ENCODE measurements at regions of chr10 and their contacts with region 1.

Region 1: GRCh38 chr10:96719850-96720421 is 378 bp downstream of the PIK3AP1 start:
- DNase-seq: peak; percentile 88
- ATAC-seq: peak; percentile 63
- H3K4me3 ChIP-seq: peak overlapping the region; percentile 86 to 98 (median 91)
- H3K4me3 Mint-ChIP-seq: peak overlapping the region; percentile 100
- H3K27ac ChIP-seq: peak overlapping the region; percentile 86 to 93
- H3K27ac Mint-ChIP-seq: peak overlapping the region; percentile 99
- H3K4me1 ChIP-seq: peaks cover 49 to 70% of the 10 kb centered on the region in 2 donors
- H3K4me1 Mint-ChIP-seq: peaks cover 70% of the 10 kb centered on the region
- H3K27me3 ChIP-seq: no peaks in the 10 kb centered on the region
- H3K27me3 Mint-ChIP-seq: no peaks in the 10 kb centered on the region
- CTCF ChIP-seq: peak; percentile 77

Region 2: DNA sequence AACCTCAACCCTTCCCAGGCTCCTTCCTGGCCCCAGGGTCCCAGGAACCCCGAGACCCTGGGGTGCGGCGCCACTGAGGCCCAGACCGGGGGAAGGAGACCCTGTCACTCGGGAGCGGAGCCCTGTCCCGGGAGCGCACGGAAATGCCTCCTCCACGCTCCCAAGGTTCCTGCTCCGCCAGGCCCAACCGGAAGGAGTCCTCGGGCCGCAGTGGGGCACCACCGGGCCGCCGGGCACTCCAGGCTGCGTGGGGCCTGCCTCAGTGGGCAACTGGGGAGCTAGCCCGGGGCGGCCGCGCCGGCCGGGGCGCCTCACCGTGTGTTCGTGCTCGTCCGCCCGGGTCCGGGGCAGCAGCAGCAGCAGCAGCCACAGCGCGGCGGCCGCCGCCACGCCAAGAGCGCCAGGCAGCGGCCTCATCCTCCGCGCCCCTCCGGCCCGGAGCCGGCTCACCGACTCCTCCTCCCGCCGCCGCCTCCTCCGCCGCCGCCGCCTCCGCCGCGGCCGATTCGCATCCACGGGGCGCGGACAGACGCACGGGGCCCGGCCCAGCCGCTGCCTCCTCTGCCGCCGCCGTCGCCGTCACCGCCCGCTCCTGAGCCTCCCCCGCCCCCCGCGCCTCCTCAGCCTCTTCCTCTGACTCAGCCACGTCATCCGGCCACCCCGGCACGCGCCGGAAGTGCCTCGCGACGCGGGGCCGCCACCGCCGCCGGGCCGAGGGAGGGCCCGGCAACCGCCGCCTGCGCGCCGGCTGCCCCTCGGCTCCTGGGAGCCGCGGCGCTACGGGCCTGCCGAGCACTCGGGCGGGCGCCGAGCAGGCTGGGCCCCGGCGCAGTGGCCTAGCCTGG is 133.3 kb before region 1 on chr10 and contains the start of gene TM9SF3:
- CTCF ChIA-PET with region 1: no interaction called
- POLR2A ChIA-PET with region 1: no interaction called
- intact Hi-C with region 1: loop called (anchors 5 kb)
- DNase-seq: peak; percentile 96
- ATAC-seq: peak; percentile 87
- H3K4me3 ChIP-seq: peak within 1 kb of the TSS; percentile 69 to 97 (median 84)
- H3K4me3 Mint-ChIP-seq: peak within 1 kb of the TSS; percentile 91
- H3K27ac ChIP-seq: peak within 1 kb of the TSS; percentile 96 to 98
- H3K27ac Mint-ChIP-seq: peak within 1 kb of the TSS; percentile 99
- H3K4me1 ChIP-seq: peaks cover 24 to 40% of the 10 kb centered on the region in 2 donors
- H3K4me1 Mint-ChIP-seq: peaks cover 41% of the 10 kb centered on the region
- H3K27me3 ChIP-seq: no peaks in the 10 kb centered on the region
- H3K27me3 Mint-ChIP-seq: no peaks in the 10 kb centered on the region
- CTCF ChIP-seq: no peak
- total RNA-seq, gene TM9SF3: 62.8 and 63.4 TPM in 2 replicates

Region 3: GRCh38 chr10:96673318-96674099 is 46.4 kb before region 1 on chr10:
- CTCF ChIA-PET with region 1: interaction called, 18 read pairs
- POLR2A ChIA-PET with region 1: interaction called, 8 read pairs
- intact Hi-C with region 1: loop called (anchors 2 kb)
- DNase-seq: peak; percentile 90
- ATAC-seq: peak; percentile 82
- H3K4me3 ChIP-seq: peak overlapping the region; percentile 33 to 65 (median 46)
- H3K4me3 Mint-ChIP-seq: peak overlapping the region; percentile 87
- H3K27ac ChIP-seq: peak overlapping the region; percentile 97 to 99
- H3K27ac Mint-ChIP-seq: peak overlapping the region; percentile 98
- H3K4me1 ChIP-seq: peaks cover 93 to 100% of the 10 kb centered on the region in 2 donors
- H3K4me1 Mint-ChIP-seq: peaks cover 84% of the 10 kb centered on the region
- H3K27me3 ChIP-seq: no peaks in the 10 kb centered on the region
- H3K27me3 Mint-ChIP-seq: no peaks in the 10 kb centered on the region
- CTCF ChIP-seq: no peak

Region 4: DNA sequence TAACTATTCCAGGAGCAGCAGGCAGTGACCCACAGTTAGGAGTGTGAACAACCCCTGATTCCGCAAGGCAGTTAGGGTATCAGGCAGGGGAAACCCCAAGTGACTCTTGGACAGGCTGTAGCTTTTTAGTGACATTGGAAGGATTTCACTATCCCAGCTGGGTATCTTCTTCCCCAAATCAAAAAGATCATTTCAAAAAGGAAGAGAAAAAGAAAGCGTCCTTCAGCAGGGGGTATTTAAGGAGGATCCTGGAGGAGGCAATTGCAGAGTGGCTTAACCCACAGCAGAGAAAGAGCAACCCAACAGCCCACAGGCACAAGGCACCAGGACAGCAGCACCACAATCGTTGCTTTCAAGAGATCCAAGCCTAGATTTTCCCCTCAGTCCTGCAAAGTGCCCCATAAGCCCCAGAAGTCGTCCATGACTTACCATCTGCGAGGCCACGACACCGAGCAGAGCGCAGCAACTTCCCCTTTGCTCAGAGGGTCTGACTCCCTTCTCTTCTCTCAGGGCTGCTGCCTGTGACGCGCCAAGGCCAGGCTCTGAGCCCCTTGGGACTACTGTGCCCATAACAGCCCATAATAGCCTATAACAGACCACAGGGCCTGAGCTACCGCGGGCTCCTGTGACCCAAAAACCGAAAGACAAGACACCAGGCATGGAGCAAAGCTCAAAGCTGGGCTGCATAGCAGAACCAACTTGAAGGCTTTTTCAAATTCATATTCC is 19.4 kb before region 1 on chr10:
- CTCF ChIA-PET with region 1: interaction called, 33 read pairs
- POLR2A ChIA-PET with region 1: interaction called, 6 read pairs
- intact Hi-C with region 1: loop called (anchors 1 kb)
- DNase-seq: peak; percentile 95
- ATAC-seq: peak; percentile 94
- H3K4me3 ChIP-seq: peak overlapping the region; percentile 75 to 97 (median 82)
- H3K4me3 Mint-ChIP-seq: peak overlapping the region; percentile 98
- H3K27ac ChIP-seq: peak overlapping the region; percentile 88 to 92
- H3K27ac Mint-ChIP-seq: peak overlapping the region; percentile 96
- H3K4me1 ChIP-seq: peaks cover 76 to 81% of the 10 kb centered on the region in 2 donors
- H3K4me1 Mint-ChIP-seq: peaks cover 77% of the 10 kb centered on the region
- H3K27me3 ChIP-seq: no peaks in the 10 kb centered on the region
- H3K27me3 Mint-ChIP-seq: no peaks in the 10 kb centered on the region
- CTCF ChIP-seq: no peak

Region 5: DNA sequence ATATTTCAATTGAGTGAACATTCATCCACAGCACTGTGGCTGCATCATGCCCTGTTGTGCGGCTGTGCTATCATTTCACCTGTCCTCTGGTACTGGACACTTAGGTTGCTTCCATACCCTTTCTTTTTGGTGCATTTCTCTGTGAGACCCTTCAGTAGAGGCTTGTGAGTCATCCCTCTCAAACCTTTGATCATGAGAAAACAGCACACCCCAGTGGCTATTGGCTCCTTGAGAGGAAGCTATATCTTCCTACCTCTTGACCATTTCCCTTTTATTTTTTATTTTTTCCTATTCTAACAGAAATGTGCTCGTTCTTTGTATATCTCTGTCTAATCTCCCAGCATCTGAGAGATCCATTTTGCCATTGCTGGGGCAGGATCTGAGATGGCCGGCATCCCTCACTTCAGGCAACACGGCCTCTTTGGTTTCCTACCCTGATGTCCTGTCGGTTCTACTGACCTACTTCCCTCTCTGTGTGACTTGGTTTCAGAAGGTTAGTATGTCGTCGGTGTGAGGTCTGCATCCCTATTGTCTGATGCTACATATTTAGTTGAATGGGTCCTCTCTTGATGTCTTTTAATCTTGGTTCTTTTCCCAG is 24.2 kb after region 1 on chr10:
- CTCF ChIA-PET with region 1: interaction called, 11 read pairs
- POLR2A ChIA-PET with region 1: interaction called, 3 read pairs
- intact Hi-C with region 1: no loop called
- DNase-seq: peak; percentile 51
- ATAC-seq: no peak
- H3K4me3 ChIP-seq: peak overlapping the region in 1 of 5 experiments; percentile 3
- H3K4me3 Mint-ChIP-seq: peak overlapping the region; percentile 30
- H3K27ac ChIP-seq: peak overlapping the region; percentile 46 to 74
- H3K27ac Mint-ChIP-seq: peak overlapping the region; percentile 83
- H3K4me1 ChIP-seq: peaks cover 81 to 83% of the 10 kb centered on the region in 2 donors
- H3K4me1 Mint-ChIP-seq: peaks cover 52% of the 10 kb centered on the region
- H3K27me3 ChIP-seq: no peaks in the 10 kb centered on the region
- H3K27me3 Mint-ChIP-seq: no peaks in the 10 kb centered on the region
- CTCF ChIP-seq: no peak

Region 6: GRCh38 chr10:96770644-96771386 is 50.9 kb after region 1 on chr10:
- CTCF ChIA-PET with region 1: no interaction called
- POLR2A ChIA-PET with region 1: no interaction called
- intact Hi-C with region 1: no loop called
- DNase-seq: no peak
- ATAC-seq: no peak
- H3K4me3 ChIP-seq: no peak overlapping the region
- H3K4me3 Mint-ChIP-seq: no peak overlapping the region
- H3K27ac ChIP-seq: no peak overlapping the region
- H3K27ac Mint-ChIP-seq: no peak overlapping the region
- H3K4me1 ChIP-seq: peaks cover 8 to 12% of the 10 kb centered on the region in 2 donors
- H3K4me1 Mint-ChIP-seq: peaks cover 9% of the 10 kb centered on the region
- H3K27me3 ChIP-seq: no peaks in the 10 kb centered on the region
- H3K27me3 Mint-ChIP-seq: no peaks in the 10 kb centered on the region
- CTCF ChIP-seq: no peak

Region 7: DNA sequence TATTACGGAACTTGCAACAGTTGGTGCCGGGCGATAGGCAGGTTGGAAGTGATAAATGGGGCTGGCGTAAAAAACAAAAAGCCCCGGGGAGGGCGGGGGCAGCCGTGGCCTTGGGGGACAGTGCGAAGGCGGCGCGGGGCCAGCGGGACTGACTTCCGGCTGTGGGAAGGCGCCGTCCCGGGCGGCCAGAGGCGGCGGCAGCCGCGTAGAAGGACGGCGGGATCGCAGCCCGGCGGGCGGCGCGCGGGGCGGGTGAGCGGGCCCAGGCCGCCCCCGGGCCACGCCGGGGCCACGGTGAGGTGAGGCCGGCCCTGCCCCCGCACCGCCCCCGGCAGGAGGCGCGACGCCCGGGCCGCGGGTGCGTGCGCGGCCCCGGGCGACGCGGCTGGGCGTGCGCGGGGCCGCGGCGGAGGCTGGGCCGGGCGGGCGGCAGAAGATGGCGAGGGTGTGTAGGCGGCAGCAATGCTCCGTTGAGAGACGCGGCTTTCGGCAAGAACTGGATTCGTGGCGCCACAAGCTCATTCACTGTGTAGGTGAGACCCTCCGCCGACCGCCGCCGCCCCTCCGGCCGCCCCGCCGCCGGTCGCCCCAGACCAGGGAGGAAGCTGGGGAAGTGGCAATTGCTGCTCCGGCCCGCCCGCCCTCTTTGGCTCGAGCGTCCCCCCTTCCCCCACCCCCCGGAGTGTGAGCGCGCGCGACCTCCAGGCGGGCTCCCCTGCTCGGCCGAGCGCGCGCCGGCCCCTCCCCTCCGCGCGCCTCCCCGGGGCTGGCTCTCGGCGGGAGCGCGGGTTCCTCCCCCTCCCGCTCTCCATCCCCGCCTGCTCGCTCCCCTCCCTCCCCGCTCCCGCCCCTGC is 112.2 kb after region 1 on chr10 and contains the start of gene LCOR:
- CTCF ChIA-PET with region 1: no interaction called
- POLR2A ChIA-PET with region 1: no interaction called
- intact Hi-C with region 1: loop called (anchors 1 kb)
- DNase-seq: peak; percentile 96
- ATAC-seq: peak; percentile 69
- H3K4me3 ChIP-seq: peak within 1 kb of the TSS; percentile 64 to 86 (median 75)
- H3K4me3 Mint-ChIP-seq: peak within 1 kb of the TSS; percentile 91
- H3K27ac ChIP-seq: peak within 1 kb of the TSS; percentile 82 to 89
- H3K27ac Mint-ChIP-seq: peak within 1 kb of the TSS; percentile 95
- H3K4me1 ChIP-seq: peaks cover 32 to 41% of the 10 kb centered on the region in 2 donors
- H3K4me1 Mint-ChIP-seq: peaks cover 53% of the 10 kb centered on the region
- H3K27me3 ChIP-seq: no peaks in the 10 kb centered on the region
- H3K27me3 Mint-ChIP-seq: no peaks in the 10 kb centered on the region
- CTCF ChIP-seq: no peak
- total RNA-seq, gene LCOR: 70.0 and 79.8 TPM in 2 replicates

Measured in B cell (primary cell).